ENCODE measurements at regions of chr12 and their contacts with region 1.

Region 1: GRCh38 chr12:120200364-120200800 is 529 bp downstream of the RPLP0 start:
- DNase-seq: no peak
- H3K4me3 Mint-ChIP-seq: peak overlapping the region; percentile 97
- H3K27ac Mint-ChIP-seq: peak overlapping the region; percentile 100
- H3K4me1 Mint-ChIP-seq: peaks cover 52% of the 10 kb centered on the region
- H3K27me3 Mint-ChIP-seq: no peaks in the 10 kb centered on the region

Region 2: DNA sequence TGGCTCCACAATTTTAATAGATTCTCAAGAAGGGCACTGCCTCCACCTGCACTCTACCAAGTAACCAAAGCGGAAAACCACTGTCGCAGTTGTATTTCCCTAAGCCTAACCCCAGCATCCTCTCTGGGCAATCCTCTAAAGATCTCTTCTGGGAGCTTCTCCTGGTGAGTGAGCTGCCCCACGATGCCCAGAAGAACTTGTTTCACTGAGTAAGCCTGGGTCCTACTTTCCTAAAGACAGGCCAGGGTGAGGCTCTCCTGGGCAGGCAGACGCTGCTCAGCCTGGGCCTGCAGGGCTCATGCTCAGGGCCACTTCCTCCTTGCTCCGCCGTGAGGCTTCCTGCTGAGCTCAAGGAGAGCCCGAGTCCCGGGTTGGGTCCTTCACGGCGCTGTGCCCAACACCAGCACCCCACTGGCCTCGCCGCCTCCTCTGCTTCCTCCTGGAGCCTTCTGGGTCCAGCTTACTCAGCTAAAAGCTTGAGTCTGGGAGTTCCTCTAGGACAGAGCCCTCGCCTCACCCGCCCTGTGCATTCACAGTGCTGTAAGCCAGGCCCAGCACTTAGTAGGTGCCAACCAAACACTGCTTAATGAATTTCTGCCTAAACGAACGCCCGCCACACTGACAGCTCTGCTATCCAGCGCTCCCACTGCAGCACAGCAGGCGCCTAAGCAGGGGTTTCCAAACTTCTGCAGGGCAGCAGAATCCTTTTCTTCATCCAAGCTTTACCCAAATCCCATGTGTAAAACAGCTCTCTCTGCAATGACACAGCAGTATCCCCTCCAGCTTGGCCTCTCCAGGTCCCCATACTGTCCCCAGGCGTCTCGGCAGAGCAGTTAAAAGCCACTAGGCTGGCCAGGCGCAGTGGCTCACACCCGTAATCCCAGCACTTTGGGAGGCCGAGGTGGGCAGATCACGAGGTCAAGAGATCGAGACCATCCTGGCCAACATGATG is 89.6 kb before region 1 on chr12:
- CTCF ChIA-PET with region 1: interaction called, 5 read pairs
- POLR2A ChIA-PET with region 1: interaction called, 236 read pairs
- DNase-seq: peak; percentile 66
- H3K4me3 Mint-ChIP-seq: peak overlapping the region; percentile 66
- H3K27ac Mint-ChIP-seq: peak overlapping the region; percentile 91
- H3K4me1 Mint-ChIP-seq: peaks cover 78% of the 10 kb centered on the region
- H3K27me3 Mint-ChIP-seq: no peaks in the 10 kb centered on the region

Region 3: GRCh38 chr12:120148011-120148410 is 52.4 kb before region 1 on chr12:
- CTCF ChIA-PET with region 1: no interaction called
- POLR2A ChIA-PET with region 1: interaction called, 10 read pairs
- DNase-seq: no peak
- H3K4me3 Mint-ChIP-seq: no peak overlapping the region
- H3K27ac Mint-ChIP-seq: no peak overlapping the region
- H3K4me1 Mint-ChIP-seq: no peaks in the 10 kb centered on the region
- H3K27me3 Mint-ChIP-seq: no peaks in the 10 kb centered on the region

Region 4: DNA sequence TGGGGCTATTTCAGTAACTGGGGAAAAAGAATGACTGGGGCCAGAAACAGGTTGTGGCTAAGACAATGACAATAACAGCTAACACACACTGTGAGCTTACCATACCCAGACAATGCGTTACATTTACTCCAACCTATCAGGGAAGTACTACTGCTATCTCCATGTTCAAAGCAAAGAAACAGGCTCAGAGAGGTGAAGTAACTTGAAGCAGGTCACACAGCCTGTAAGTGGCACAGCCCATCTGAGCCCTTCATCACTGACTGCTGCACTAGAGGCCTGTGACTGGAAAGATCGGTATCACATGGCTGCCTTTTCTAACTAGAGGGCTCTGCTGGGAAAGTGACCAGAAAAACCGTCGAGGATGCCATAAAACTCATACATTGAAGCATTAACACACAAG is 13.7 kb before region 1 on chr12:
- CTCF ChIA-PET with region 1: interaction called, 15 read pairs
- POLR2A ChIA-PET with region 1: interaction called, 90 read pairs
- DNase-seq: no peak
- H3K4me3 Mint-ChIP-seq: no peak overlapping the region
- H3K27ac Mint-ChIP-seq: no peak overlapping the region
- H3K4me1 Mint-ChIP-seq: peaks cover 16% of the 10 kb centered on the region
- H3K27me3 Mint-ChIP-seq: no peaks in the 10 kb centered on the region

Region 5: GRCh38 chr12:120234643-120235368 is 34.4 kb after region 1 on chr12:
- CTCF ChIA-PET with region 1: interaction called, 92 read pairs
- POLR2A ChIA-PET with region 1: interaction called, 159 read pairs
- DNase-seq: no peak
- H3K4me3 Mint-ChIP-seq: no peak overlapping the region
- H3K27ac Mint-ChIP-seq: no peak overlapping the region
- H3K4me1 Mint-ChIP-seq: peaks cover 85% of the 10 kb centered on the region
- H3K27me3 Mint-ChIP-seq: no peaks in the 10 kb centered on the region

Measured in activated CD4-positive, alpha-beta memory T cell treated with anti-CD3 and anti-CD28 coated beads, Interleukin-2, amount 10 ng/mL, durations not matched to agents 7 days and 5 days (primary cell).